ENCODE measurements at regions of chrX and their contacts with region 1.

Region 1: DNA sequence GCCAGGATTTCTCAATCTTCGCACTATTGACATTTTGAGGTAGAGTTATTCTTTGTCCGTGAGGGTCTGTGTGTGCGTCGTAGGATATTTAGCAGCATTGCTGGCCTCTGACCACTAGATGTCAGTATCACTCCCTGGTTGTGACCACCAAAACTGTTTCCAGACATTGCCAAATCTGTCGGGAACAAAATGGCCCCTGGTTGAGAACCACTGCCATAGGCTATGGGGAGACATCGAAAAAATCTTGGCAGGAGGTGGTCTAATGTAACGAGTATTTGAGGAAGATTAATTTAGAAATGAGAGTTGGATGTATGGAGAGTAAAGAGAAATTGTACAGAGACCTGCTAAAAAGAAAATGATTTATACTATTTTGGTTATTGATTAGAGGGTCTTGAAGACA is 108.4 kb downstream of the DOCK11 start:
- DNase-seq: peak; percentile 11
- ATAC-seq: peak; percentile 86
- H3K4me3 ChIP-seq: no peak overlapping the region
- H3K27ac ChIP-seq: no peak overlapping the region
- H3K4me1 ChIP-seq: no peaks in the 10 kb centered on the region
- H3K27me3 ChIP-seq: no peaks in the 10 kb centered on the region
- CTCF ChIP-seq: peak; percentile 81 to 85 (median 82)
- EP300 ChIP-seq: no peak
- POLR2A ChIP-seq: no peak
- RAD21 ChIP-seq: peak; percentile 74

Region 2: GRCh38 chrX:118325453-118325852 is 278.5 kb before region 1 on chrX:
- CTCF ChIA-PET with region 1: interaction called, 23 read pairs
- POLR2A ChIA-PET with region 1: no interaction called
- RAD21 ChIA-PET with region 1: interaction called, 5 read pairs
- SMC1A ChIA-PET with region 1: interaction called, 5 read pairs
- in situ Hi-C with region 1: no loop called
- intact Hi-C with region 1: loop called (anchors 5 kb)
- DNase-seq: no peak
- ATAC-seq: peak; percentile 55; the same call in 2 of the 3 replicates
- H3K4me3 ChIP-seq: no peak overlapping the region
- H3K27ac ChIP-seq: no peak overlapping the region
- H3K4me1 ChIP-seq: no peaks in the 10 kb centered on the region
- H3K27me3 ChIP-seq: no peaks in the 10 kb centered on the region
- CTCF ChIP-seq: peak; percentile 27 to 34 (median 32); a peak in 5 of 6 replicates
- EP300 ChIP-seq: no peak
- POLR2A ChIP-seq: no peak
- RAD21 ChIP-seq: peak; percentile 52

Region 3: GRCh38 chrX:118459494-118459893 is 144.5 kb before region 1 on chrX:
- CTCF ChIA-PET with region 1: interaction called, 109 read pairs
- POLR2A ChIA-PET with region 1: no interaction called
- RAD21 ChIA-PET with region 1: interaction called, 69 read pairs
- SMC1A ChIA-PET with region 1: interaction called, 76 read pairs
- in situ Hi-C with region 1: no loop called
- intact Hi-C with region 1: loop called (anchors 2 kb)
- DNase-seq: peak; percentile 2
- ATAC-seq: peak; percentile 81
- H3K4me3 ChIP-seq: no peak overlapping the region
- H3K27ac ChIP-seq: no peak overlapping the region
- H3K4me1 ChIP-seq: no peaks in the 10 kb centered on the region
- H3K27me3 ChIP-seq: no peaks in the 10 kb centered on the region
- CTCF ChIP-seq: peak; percentile 43 to 60 (median 44); a peak in 4 of 6 replicates
- EP300 ChIP-seq: no peak
- POLR2A ChIP-seq: no peak
- RAD21 ChIP-seq: peak; percentile 80

Region 4: GRCh38 chrX:118588715-118589114 is 15.3 kb before region 1 on chrX:
- CTCF ChIA-PET with region 1: interaction called, 15 read pairs
- POLR2A ChIA-PET with region 1: interaction called, 4 read pairs
- RAD21 ChIA-PET with region 1: no interaction called
- SMC1A ChIA-PET with region 1: interaction called, 4 read pairs
- in situ Hi-C with region 1: no loop called
- intact Hi-C with region 1: no loop called
- DNase-seq: no peak
- ATAC-seq: no peak
- H3K4me3 ChIP-seq: no peak overlapping the region
- H3K27ac ChIP-seq: no peak overlapping the region
- H3K4me1 ChIP-seq: no peaks in the 10 kb centered on the region
- H3K27me3 ChIP-seq: no peaks in the 10 kb centered on the region
- CTCF ChIP-seq: no peak
- EP300 ChIP-seq: no peak
- POLR2A ChIP-seq: no peak
- RAD21 ChIP-seq: no peak

Region 5: GRCh38 chrX:118614150-118614549 is 10.2 kb after region 1 on chrX:
- CTCF ChIA-PET with region 1: interaction called, 62 read pairs
- POLR2A ChIA-PET with region 1: no interaction called
- RAD21 ChIA-PET with region 1: interaction called, 8 read pairs
- SMC1A ChIA-PET with region 1: interaction called, 7 read pairs
- in situ Hi-C with region 1: no loop called
- intact Hi-C with region 1: no loop called
- DNase-seq: no peak
- ATAC-seq: peak; percentile 74
- H3K4me3 ChIP-seq: no peak overlapping the region
- H3K27ac ChIP-seq: no peak overlapping the region
- H3K4me1 ChIP-seq: no peaks in the 10 kb centered on the region
- H3K27me3 ChIP-seq: no peaks in the 10 kb centered on the region
- CTCF ChIP-seq: no peak
- EP300 ChIP-seq: no peak
- POLR2A ChIP-seq: no peak
- RAD21 ChIP-seq: no peak

Measured in GM12878 (cell line).